ENCODE measurements at regions of chr6 and their contacts with region 1.

Region 1: DNA sequence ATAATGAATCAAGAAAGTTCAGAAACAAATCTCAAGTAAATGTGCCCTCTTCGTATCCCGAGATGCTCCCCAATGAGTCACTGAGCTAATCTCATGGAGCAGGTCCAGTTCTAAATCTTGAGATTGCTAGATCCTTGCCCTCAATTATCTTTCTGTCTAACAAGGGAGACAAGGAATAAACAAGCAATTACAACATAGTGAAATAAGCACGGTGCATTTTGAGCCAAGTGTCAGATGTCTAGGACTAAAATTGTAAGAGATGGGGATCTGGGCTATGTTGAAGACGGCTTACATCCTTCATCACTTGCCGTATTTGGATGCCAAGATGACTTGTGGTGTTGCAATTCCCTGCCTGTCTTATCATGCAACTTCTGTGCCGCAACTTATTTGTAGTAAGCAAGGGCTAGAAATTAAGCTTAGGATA is 56.5 kb upstream of the ADGRF1 start:
- DNase-seq: no peak
- H3K4me3 ChIP-seq: no peak overlapping the region
- H3K27ac ChIP-seq: no peak overlapping the region
- H3K4me1 ChIP-seq: peaks cover 0 to 8% of the 10 kb centered on the region in 2 donors
- H3K27me3 ChIP-seq: no peaks in the 10 kb centered on the region
- CTCF ChIP-seq: no peak
- POLR2A ChIP-seq: no peak

Region 2: GRCh38 chr6:47161176-47161687 is 62.6 kb after region 1 on chr6:
- intact Hi-C with region 1: no loop called
- DNase-seq: no peak
- H3K4me3 ChIP-seq: no peak overlapping the region
- H3K27ac ChIP-seq: no peak overlapping the region
- H3K4me1 ChIP-seq: peaks cover 0 to 6% of the 10 kb centered on the region in 2 donors
- H3K27me3 ChIP-seq: no peaks in the 10 kb centered on the region
- CTCF ChIP-seq: no peak
- POLR2A ChIP-seq: no peak

Region 3: GRCh38 chr6:47309291-47310130 is 210.9 kb after region 1 on chr6 and contains the start of gene TNFRSF21:
- intact Hi-C with region 1: loop called (anchors 2 kb)
- DNase-seq: peak; percentile 89 to 92
- H3K4me3 ChIP-seq: peak within 1 kb of the TSS; percentile 7 to 64 (median 40)
- H3K27ac ChIP-seq: peak within 1 kb of the TSS in 2 of 3 donors; percentile 59 to 60
- H3K4me1 ChIP-seq: peaks cover 3 to 4% of the 10 kb centered on the region in 2 donors
- H3K27me3 ChIP-seq: no peaks in the 10 kb centered on the region
- CTCF ChIP-seq: peak; percentile 78 to 97 (median 95)
- POLR2A ChIP-seq: peak in 1 of 2 donors; percentile 82
- total RNA-seq, gene TNFRSF21: 5.7 to 13.6 (median 7.0) TPM

Measured in thyroid gland (tissue), 4 donors.